Activated CD8-positive, alpha-beta T cell treated with anti-CD3 and anti-CD28 coated beads for 36 hours (primary cell): ENCODE measurements at regions of chr7 and their contacts with region 1.

Region 1: DNA sequence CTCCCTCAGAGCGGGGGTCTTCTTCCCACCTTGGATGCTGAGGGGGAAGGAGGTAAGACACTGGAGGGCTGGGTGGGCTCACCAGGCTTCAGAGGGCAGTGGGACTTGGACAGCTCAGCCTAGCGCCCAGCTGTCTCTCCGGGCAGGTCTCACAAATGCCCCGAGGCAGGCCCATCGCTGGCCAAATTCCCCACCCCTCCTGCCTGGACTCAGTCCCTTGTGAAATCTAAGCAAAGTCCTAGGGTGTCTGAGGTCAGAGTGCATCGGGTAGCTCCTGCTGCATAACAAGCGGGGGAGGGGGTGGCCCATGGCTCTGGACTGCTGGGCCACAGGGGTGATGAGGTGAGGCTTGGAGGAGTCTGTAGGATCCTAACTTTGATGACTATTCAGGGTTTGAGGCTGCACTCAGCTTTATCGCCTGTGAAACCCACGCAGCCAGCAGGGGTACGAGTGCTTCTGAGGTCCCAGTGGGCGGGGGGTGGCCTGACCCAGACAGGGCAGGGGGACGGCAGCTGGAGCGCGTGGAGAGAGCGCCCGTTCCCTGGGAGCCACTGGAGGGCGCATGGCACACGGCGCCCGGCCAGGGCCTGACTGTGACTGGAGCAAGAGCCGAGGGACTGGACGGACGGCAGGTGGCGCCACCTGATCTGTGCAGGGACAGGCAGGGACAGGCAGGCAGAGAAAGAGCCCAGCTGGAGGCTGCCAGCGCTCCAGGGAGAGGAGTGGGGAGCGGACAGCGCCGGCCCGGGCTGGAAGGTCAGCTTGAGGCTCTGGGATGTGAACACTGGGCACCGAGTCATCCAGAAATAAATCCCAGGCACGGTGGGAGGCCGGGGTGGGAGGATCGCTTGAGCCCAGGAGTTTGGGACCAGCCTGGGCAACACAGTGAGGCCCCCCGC is 10.0 kb downstream of the CYP2W1 start:
- DNase-seq: peak; percentile 96
- ATAC-seq: peak; percentile 98
- H3K4me3 Mint-ChIP-seq: no peak overlapping the region
- H3K27ac Mint-ChIP-seq: no peak overlapping the region
- H3K4me1 Mint-ChIP-seq: peaks cover 5% of the 10 kb centered on the region
- H3K27me3 Mint-ChIP-seq: no peaks in the 10 kb centered on the region
- CTCF ChIP-seq: peak; percentile 97

Region 2: GRCh38 chr7:711093-711921 is 281.7 kb before region 1 on chr7:
- CTCF ChIA-PET with region 1: no interaction called
- POLR2A ChIA-PET with region 1: no interaction called
- intact Hi-C with region 1: no loop called
- DNase-seq: no peak
- ATAC-seq: no peak
- H3K4me3 Mint-ChIP-seq: peak overlapping the region; percentile 60
- H3K27ac Mint-ChIP-seq: no peak overlapping the region
- H3K4me1 Mint-ChIP-seq: peaks cover 13% of the 10 kb centered on the region
- H3K27me3 Mint-ChIP-seq: no peaks in the 10 kb centered on the region
- CTCF ChIP-seq: no peak

Region 3: GRCh38 chr7:1004018-1004852 is 11.3 kb after region 1 on chr7:
- CTCF ChIA-PET with region 1: interaction called, 15 read pairs
- POLR2A ChIA-PET with region 1: no interaction called
- intact Hi-C with region 1: no loop called
- DNase-seq: no peak
- ATAC-seq: no peak
- H3K4me3 Mint-ChIP-seq: no peak overlapping the region
- H3K27ac Mint-ChIP-seq: no peak overlapping the region
- H3K4me1 Mint-ChIP-seq: no peaks in the 10 kb centered on the region
- H3K27me3 Mint-ChIP-seq: no peaks in the 10 kb centered on the region
- CTCF ChIP-seq: no peak

Region 4: DNA sequence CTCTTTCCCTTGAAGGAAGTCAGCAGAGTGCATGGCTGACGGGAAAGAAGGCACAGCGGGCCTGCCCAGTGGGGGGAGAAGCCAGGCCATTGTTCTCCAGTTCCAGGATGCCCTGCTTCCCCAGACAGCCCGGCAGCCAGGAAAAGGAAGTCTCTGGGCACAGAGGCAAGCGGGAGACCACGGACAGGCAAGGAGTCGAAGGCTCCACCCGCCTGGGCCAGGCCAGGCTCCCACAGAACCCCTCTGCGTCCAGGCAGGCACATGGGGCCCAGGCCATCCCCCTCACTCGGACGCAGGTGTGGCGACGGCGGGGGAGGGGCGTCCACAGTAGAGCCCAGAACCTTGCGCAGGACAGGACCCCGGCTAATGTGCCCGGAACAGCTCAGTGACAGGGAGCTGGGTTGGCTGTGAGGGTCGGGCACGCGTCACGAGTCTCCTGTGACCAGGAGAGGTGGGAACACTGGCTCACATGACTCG is 60.1 kb after region 1 on chr7:
- CTCF ChIA-PET with region 1: interaction called, 20 read pairs
- POLR2A ChIA-PET with region 1: no interaction called
- intact Hi-C with region 1: loop called (anchors 10 kb)
- DNase-seq: no peak
- ATAC-seq: no peak
- H3K4me3 Mint-ChIP-seq: no peak overlapping the region
- H3K27ac Mint-ChIP-seq: no peak overlapping the region
- H3K4me1 Mint-ChIP-seq: peaks cover 36% of the 10 kb centered on the region
- H3K27me3 Mint-ChIP-seq: no peaks in the 10 kb centered on the region
- CTCF ChIP-seq: no peak

Region 5: GRCh38 chr7:1086588-1087464 is 93.9 kb after region 1 on chr7:
- CTCF ChIA-PET with region 1: interaction called, 24 read pairs
- POLR2A ChIA-PET with region 1: no interaction called
- intact Hi-C with region 1: no loop called
- DNase-seq: peak; percentile 85
- ATAC-seq: peak; percentile 92
- H3K4me3 Mint-ChIP-seq: peak overlapping the region; percentile 58
- H3K27ac Mint-ChIP-seq: peak overlapping the region; percentile 46
- H3K4me1 Mint-ChIP-seq: peaks cover 16% of the 10 kb centered on the region
- H3K27me3 Mint-ChIP-seq: no peaks in the 10 kb centered on the region
- CTCF ChIP-seq: peak; percentile 99

Region 6: GRCh38 chr7:1159891-1160668 is 167.1 kb after region 1 on chr7 and contains the start of gene ZFAND2A:
- CTCF ChIA-PET with region 1: interaction called, 13 read pairs
- POLR2A ChIA-PET with region 1: interaction called, 4 read pairs
- intact Hi-C with region 1: loop called (anchors 10 kb)
- DNase-seq: peak; percentile 99
- ATAC-seq: peak; percentile 98
- H3K4me3 Mint-ChIP-seq: peak within 1 kb of the TSS; percentile 87
- H3K27ac Mint-ChIP-seq: peak within 1 kb of the TSS; percentile 89
- H3K4me1 Mint-ChIP-seq: peaks cover 24% of the 10 kb centered on the region
- H3K27me3 Mint-ChIP-seq: no peaks in the 10 kb centered on the region
- CTCF ChIP-seq: no peak
- total RNA-seq, gene ZFAND2A: 22.1 to 23.5 TPM